ENCODE measurements at regions of chr17 and their contacts with region 1.

Region 1: DNA sequence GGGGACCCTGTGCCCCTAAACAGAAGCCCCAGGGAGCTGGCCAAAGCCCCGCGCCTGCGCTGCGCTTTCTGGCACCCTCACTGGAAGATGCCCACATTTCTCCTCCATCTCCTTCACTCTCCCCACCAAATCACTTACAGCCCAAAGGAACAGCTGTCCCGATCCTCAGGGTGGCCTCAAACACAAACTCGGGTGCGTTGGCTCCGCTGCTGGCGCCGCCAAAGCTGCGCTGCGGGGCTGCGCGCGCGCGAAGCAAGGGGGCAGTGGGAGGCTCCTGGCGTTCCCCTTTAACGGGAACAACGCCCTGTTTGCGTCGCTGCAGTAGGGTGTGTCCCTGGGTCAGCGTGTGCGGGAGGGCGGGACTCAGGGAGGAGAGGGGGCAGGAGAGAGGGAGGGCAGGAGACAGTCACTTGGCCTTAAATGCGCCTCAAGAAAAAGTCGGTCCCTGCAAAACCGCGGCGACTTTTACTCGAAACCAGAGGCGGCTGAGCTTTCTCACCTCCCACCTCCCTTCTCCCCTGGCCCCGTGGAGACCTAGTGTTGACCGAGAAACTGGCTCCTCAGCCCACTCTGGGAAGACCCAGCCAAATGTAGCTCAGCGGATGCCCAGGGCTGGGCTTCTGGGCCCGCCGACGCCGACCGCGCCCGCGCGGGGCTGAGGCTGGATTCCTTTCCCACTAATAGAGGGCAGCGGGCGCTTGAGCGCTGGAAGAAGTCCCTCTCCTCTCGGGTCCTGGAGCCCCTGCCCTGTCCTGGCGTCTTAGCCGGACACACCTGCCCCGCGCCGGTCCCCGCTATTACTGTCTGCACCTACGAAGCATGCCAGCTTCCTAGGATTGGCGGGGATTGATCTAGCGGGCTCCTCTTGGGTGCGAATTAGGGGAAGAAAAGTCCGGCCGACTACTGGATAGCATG is 2.6 kb downstream of the PMP22 start:
- DNase-seq: no peak
- H3K4me3 ChIP-seq: peak overlapping the region; percentile 89
- CTCF ChIP-seq: peak; percentile 12

Region 2: GRCh38 chr17:15273141-15273793 is 10.7 kb after region 1 on chr17:
- CTCF ChIA-PET with region 1: interaction called, 6 read pairs
- POLR2A ChIA-PET with region 1: interaction called, 10 read pairs
- DNase-seq: peak; percentile 93
- H3K4me3 ChIP-seq: no peak overlapping the region
- CTCF ChIP-seq: no peak

Region 3: GRCh38 chr17:15377616-15378015 is 115.1 kb after region 1 on chr17:
- CTCF ChIA-PET with region 1: interaction called, 10 read pairs
- POLR2A ChIA-PET with region 1: interaction called, 6 read pairs
- DNase-seq: peak; percentile 21
- H3K4me3 ChIP-seq: no peak overlapping the region
- CTCF ChIP-seq: no peak

Region 4: DNA sequence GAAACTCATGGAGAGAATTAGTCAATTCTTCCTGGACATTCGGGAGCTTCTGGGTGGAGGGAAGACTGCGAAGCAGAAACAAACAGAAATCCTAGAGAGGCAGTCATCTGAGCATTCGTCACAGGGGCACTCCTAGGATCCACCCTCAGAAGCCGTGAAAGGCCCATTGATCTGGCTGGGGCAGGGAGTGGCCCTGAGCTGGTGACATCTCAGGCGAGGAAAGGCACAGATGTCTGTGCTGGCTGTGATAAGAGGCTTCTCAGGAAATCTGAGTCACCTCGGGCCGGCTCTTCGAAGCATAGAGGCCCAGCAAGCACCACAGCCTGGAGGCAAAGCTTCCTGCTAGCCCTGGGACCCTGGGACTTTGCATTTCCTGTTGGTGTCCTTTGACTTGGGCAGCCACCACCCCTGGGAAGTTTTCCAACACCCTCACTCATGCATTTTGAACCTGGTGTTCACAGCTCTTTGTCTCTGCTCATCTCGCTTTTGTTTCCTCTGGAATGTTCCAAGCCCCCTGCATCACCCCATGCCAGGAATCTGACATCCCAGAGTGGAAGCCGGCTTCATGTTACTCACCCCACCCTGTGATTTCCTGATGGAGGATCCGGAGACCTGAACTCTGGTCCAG is 228.2 kb after region 1 on chr17:
- CTCF ChIA-PET with region 1: interaction called, 318 read pairs
- POLR2A ChIA-PET with region 1: interaction called, 3 read pairs
- DNase-seq: no peak
- H3K4me3 ChIP-seq: no peak overlapping the region
- CTCF ChIP-seq: no peak

Region 5: DNA sequence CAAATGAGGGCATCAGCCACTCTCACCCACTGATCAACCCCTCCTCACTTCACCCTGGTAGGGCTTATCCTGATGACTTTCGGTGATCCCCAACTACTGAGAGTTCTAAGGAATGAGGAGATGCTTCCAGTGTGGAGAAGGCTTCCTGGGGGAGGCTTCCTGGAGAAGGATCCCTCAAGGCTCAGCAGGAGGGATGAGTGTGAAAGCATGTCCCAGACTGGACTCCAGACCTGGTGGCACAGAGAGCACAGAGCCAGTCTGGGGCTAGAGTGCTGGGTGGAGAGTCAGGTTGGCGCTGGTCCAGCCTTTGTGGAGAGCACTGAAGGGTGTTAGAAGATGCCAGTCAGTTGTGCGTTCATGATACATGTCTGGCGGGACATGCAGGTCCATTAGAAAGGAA is 1889.8 kb after region 1 on chr17:
- CTCF ChIA-PET with region 1: no interaction called
- POLR2A ChIA-PET with region 1: no interaction called
- DNase-seq: no peak
- H3K4me3 ChIP-seq: no peak overlapping the region
- CTCF ChIP-seq: no peak